Cardiac septum (tissue), 1 donor: ENCODE measurements at regions of chr9 and their contacts with region 1.

Region 1: DNA sequence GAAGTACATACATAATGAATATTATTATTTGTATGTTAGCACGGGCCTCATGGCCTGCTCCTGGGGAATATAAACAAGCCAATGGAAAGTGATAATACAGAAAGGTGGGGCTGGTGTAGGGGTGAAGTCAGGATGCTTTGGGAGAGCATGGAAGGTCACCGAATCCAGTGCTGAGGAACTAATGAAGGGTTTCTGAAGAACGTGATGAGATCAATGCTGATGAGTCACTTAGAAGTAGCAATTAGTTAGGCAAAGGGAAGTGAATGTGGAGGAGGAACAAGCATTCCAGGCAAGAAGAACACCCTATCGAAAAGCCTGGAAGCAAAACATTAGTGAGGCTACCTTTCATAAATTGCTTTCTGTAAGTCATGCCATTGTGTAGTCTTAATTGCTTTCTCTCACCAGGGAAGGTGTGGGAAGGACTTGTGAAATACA is 2.1 kb downstream of the ANXA1 start:
- DNase-seq: no peak

Region 2: DNA sequence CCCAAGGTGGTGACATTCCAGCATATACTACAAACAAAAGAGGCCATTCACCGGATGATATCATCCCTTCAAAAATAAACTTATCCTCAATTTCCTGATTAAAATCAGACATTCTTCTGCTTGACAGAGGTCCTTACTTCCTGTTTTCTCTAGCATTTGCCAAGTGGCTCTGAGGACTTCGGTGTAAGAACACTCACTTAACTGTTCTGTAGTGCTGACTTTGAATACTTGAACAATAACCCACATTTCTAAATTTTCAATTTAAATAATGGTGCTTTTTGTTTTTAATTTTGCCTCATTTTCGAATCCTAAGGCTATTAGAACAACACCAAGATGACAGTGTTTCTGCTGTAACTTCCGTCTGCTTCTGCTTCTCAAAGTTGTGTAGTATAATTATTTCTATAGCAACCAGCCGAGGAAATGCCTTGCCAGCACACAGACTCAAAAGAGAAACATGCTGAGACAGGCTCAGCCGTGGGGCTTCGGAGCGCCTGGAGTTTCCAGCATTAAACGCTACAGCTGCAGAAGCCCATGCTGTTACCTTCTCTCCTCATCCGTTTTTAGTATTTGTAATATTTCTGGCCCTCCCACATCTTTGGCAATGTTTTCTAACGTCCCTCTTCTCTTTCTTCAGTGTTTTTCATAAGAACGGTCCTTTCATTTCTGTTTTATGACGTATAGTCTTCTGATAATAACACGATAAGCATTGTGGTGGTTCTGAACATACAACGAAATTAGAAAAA is 21.6 kb before region 1 on chr9:
- intact Hi-C with region 1: loop called (anchors 1 kb)
- DNase-seq: peak; percentile 84

Region 3: GRCh38 chr9:73402081-73403028 is 248.5 kb after region 1 on chr9:
- intact Hi-C with region 1: no loop called
- DNase-seq: no peak